ENCODE measurements at regions of chr5 and their contacts with region 1.

Region 1: GRCh38 chr5:55994574-55995333 is at the start of gene IL6ST:
- DNase-seq: peak; percentile 94 to 99 (median 98)
- H3K4me3 ChIP-seq: peak within 1 kb of the TSS; percentile 54 to 96 (median 85)
- H3K27ac ChIP-seq: peak within 1 kb of the TSS; percentile 84 to 100 (median 98)
- H3K27me3 ChIP-seq: no peaks in the 10 kb centered on the region
- CTCF ChIP-seq: peak in 53 of 56 donors; percentile 15 to 82 (median 52)
- total RNA-seq, gene IL6ST: 155 to 373 (median 228) TPM

Region 2: DNA sequence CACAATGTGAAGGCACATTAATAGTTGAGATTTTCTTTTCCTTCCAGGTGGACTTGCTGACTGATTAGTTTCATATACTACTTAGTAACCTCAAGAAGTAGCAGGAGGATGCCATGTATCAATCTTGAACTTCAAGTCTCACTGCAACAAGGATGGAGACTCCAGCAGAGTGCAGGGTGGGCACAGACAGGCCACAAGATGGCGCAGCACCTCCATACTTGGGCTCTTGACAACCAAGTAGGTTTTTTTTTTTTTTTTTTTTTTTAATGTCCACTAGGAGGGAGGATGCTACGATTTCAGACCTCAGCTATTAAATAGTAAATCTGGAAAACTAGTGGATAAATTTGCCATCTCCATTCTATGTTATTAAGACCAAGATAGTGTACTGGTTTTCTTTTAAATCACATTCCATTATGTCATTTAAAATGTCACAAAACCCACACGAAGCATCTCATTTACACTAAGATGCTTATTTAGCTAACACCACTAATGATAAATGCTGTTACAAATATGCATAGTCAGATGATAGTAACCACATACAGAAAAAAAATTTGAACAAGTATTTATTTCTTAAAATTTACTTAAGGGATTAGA is 58.6 kb before region 1 on chr5:
- intact Hi-C with region 1: loop called (anchors 2 to 5 kb)
- DNase-seq: peak; percentile 65 to 90 (median 80)
- H3K4me3 ChIP-seq: no peak overlapping the region
- H3K27ac ChIP-seq: peak overlapping the region in 1 of 59 donors; percentile 22
- H3K27me3 ChIP-seq: no peaks in the 10 kb centered on the region
- CTCF ChIP-seq: peak; percentile 77 to 99 (median 92)

Region 3: DNA sequence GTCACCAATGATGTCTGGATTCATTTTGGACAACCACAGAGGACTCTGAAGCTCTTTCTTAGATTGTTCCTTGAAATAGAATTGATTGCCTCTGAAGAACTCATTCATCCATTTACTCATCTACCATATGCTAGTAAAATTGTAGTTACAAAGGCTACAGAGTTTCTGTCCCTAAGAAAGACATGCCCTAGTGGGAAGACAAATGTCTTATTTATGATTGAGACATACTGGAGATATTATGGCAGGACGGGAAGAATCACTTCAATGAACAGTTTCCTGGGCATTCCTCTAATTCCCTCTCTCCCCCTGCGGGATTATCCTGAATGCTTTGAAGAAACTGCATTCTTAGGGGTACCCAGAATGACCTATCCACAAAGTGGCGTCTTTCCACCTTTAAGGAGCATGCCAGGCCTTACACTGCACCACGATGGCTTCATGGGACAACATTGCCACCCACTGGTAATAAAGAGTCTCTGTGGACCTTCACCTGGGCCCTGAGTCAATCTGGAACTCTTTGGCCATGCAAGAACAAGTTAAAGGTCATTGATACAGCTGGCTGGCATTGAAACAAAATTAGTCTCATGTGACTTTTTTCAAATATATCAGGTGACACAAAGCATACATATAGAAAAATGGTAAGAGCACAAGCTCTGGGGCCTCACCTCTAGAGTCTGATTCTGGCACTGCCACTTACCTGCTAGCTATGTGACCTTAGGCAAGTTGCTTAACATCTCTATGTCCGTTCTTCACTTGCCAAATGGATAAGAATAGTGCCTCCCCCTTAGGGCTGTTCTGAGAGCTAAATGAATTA is 206.3 kb after region 1 on chr5:
- intact Hi-C with region 1: loop called in 1 of 2 experiments (anchors 2 kb)
- DNase-seq: peak in 5 of 10 donors; percentile 20 to 56 (median 48)
- H3K4me3 ChIP-seq: no peak overlapping the region
- H3K27ac ChIP-seq: no peak overlapping the region
- H3K27me3 ChIP-seq: no peaks in the 10 kb centered on the region
- CTCF ChIP-seq: peak in 55 of 56 donors; percentile 37 to 83 (median 69)

Region 4: GRCh38 chr5:56838409-56839039 is 843.8 kb after region 1 on chr5:
- intact Hi-C with region 1: loop called in 1 of 2 experiments (anchors 5 kb)
- DNase-seq: no peak
- H3K4me3 ChIP-seq: peak overlapping the region in 25 of 59 donors; percentile 3 to 47 (median 27)
- H3K27ac ChIP-seq: peak overlapping the region in 13 of 59 donors; percentile 3 to 63 (median 20)
- H3K27me3 ChIP-seq: no peaks in the 10 kb centered on the region
- CTCF ChIP-seq: peak; percentile 52 to 91 (median 73)

Region 5: DNA sequence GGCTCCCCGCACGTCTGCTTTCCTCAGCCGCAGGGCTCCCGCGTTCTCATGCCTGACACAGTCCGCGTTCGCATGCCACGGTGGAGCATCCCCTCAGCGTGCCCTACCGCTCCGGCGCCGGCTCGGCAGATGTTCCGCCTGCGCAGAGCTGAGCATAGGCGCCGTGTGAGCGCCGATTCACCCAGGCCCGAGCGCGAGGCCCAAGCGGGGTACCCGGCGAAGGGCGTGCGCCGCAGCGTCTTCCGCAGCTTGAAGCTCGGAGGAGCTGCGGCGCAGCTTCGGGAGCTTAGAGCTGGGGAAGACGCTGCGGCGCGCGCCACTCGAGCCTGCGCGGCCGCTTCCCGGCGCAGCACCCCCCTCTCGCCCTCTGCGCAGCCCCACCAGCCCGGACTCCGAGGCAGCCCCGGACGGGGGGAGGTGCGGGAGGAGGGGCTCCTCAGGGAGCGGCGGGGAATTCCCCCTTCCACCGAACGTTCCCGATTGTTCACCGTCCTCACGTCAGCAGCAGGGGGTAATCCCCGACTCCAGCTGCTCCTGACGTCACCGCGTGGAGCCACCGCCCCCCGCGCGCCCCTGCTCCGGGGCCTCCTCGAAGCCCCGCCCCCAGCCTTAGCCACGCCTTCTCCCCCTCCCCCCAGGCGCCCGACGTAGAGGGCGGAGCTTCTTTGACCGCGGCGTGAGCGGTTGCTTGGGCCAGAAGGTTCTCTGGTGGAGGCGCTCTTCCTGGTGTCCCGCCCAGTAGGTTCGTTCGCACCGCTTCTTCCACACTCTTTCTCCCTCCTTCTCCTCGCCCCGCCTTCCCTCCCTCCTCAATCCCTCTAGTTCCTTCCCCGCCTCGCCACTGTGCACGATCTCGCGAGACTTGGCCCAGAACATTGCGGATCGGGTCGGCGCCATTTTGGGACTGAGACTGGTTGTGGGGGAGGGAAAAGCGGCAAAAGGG is 1178.7 kb after region 1 on chr5 and contains the start of gene GPBP1:
- intact Hi-C with region 1: loop called in 1 of 2 experiments (anchors 5 kb)
- DNase-seq: peak; percentile 95 to 99 (median 97)
- H3K4me3 ChIP-seq: peak within 1 kb of the TSS; percentile 68 to 100 (median 92)
- H3K27ac ChIP-seq: peak within 1 kb of the TSS; percentile 92 to 100 (median 100)
- H3K27me3 ChIP-seq: no peaks in the 10 kb centered on the region
- CTCF ChIP-seq: peak in 24 of 56 donors; percentile 4 to 43 (median 16)
- total RNA-seq, gene GPBP1: 86.6 to 165 (median 112) TPM